H1 (cell line): ENCODE measurements at regions of chr19 and their contacts with region 1.

Region 1: DNA sequence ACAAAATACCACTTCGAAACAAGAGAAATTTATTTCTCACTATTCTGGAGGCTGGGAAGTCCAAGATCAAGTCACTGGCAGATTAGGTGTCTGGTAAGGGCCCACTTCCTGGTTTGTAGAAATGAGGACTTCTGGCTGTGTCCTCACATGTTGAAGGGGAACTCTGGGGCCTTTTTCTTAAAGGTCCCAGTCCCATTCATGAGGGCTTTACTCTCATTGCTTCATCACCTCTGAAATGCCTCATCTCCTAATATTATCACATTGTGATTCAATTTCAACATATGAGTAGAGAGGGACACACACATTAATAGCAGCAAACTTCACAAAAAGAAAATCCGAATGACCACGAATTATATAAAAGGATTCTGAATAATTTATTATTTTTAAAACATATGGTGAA is 21.6 kb upstream of the SIGLEC14 start:
- DNase-seq: no peak
- H3K4me3 ChIP-seq: no peak overlapping the region
- H3K27ac ChIP-seq: no peak overlapping the region
- H3K4me1 ChIP-seq: no peaks in the 10 kb centered on the region
- H3K27me3 ChIP-seq: peaks cover 0 to 2% (median 0%) of the 10 kb centered on the region in 4 experiments; a peak in 1 of 7 replicates
- CTCF ChIP-seq: no peak
- EP300 ChIP-seq: no peak
- POLR2A ChIP-seq: no peak
- RAD21 ChIP-seq: no peak

Region 2: GRCh38 chr19:51681321-51682168 is 13.3 kb after region 1 on chr19:
- CTCF ChIA-PET with region 1: interaction called, 13 read pairs
- POLR2A ChIA-PET with region 1: no interaction called
- DNase-seq: no peak
- H3K4me3 ChIP-seq: no peak overlapping the region
- H3K27ac ChIP-seq: no peak overlapping the region
- H3K4me1 ChIP-seq: no peaks in the 10 kb centered on the region
- H3K27me3 ChIP-seq: 0 out of 7 replicates have a peak, but pooled peaks cover 0 to 4% (median 0%) of the 10 kb centered on the region in 4 experiments
- CTCF ChIP-seq: no peak
- EP300 ChIP-seq: no peak
- POLR2A ChIP-seq: no peak
- RAD21 ChIP-seq: no peak